Prostate gland (tissue), 2 donors: ENCODE measurements at regions of chr3 and their contacts with region 1.

Region 1: DNA sequence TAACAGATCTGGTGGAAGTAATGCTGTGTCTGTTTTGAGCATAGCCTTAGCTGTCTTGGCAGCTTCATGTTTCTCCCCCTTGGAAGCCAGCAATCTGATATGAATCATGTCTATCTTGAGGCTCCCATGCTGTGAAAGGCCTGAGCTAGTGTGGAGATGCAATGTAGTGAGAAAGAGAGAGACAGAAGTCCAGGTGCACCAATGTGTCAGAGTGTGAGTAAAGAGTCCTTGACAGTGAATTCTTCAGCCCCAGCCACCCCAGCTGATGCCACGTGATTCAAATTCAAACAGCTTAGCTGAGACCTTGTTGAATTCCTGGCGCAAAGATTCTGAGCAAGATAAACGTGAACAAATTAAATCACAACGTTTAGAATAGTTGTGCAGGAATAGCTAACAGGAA is 704.2 kb downstream of the EDEM1 start:
- DNase-seq: no peak
- H3K4me3 ChIP-seq: no peak overlapping the region
- H3K27ac ChIP-seq: no peak overlapping the region
- H3K4me1 ChIP-seq: no peaks in the 10 kb centered on the region
- H3K27me3 ChIP-seq: no peaks in the 10 kb centered on the region
- CTCF ChIP-seq: no peak
- POLR2A ChIP-seq: no peak

Region 2: DNA sequence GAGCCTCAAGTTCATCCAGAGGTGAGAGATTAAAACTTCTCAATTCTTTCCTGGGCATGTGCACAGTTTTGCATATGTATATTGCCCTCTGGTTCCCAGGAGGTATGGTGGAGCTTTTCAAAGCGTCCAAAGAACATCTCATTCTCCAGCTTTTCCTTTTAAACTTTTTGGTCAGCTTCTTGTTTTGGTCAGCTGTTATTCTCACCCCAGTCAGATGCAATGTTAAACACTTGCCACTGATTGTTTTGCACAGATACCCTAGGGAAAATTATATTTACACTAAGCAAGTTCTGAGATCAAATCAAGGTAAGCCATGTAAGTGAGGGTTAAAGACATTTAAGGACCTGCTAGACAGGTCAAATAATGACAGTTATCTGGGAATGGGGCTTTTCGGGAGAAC is 442.9 kb before region 1 on chr3:
- intact Hi-C with region 1: loop called (anchors 5 kb)
- DNase-seq: no peak
- H3K4me3 ChIP-seq: no peak overlapping the region
- H3K27ac ChIP-seq: no peak overlapping the region
- H3K4me1 ChIP-seq: no peaks in the 10 kb centered on the region
- H3K27me3 ChIP-seq: no peaks in the 10 kb centered on the region
- CTCF ChIP-seq: no peak
- POLR2A ChIP-seq: no peak

Region 3: GRCh38 chr3:6249679-6250078 is 358.0 kb after region 1 on chr3:
- intact Hi-C with region 1: no loop called
- DNase-seq: no peak
- H3K4me3 ChIP-seq: no peak overlapping the region
- H3K27ac ChIP-seq: no peak overlapping the region
- H3K4me1 ChIP-seq: no peaks in the 10 kb centered on the region
- H3K27me3 ChIP-seq: no peaks in the 10 kb centered on the region
- CTCF ChIP-seq: no peak
- POLR2A ChIP-seq: no peak